A673 (cell line): ENCODE measurements at regions of chr13 and their contacts with region 1.

Region 1: GRCh38 chr13:101942038-101942437 is 459.8 kb downstream of the FGF14 start:
- DNase-seq: peak; percentile 80
- H3K4me3 ChIP-seq: no peak overlapping the region
- H3K27ac ChIP-seq: no peak overlapping the region
- H3K4me1 ChIP-seq: peaks cover 13% of the 10 kb centered on the region
- H3K27me3 ChIP-seq: no peaks in the 10 kb centered on the region
- CTCF ChIP-seq: peak; percentile 88

Region 2: DNA sequence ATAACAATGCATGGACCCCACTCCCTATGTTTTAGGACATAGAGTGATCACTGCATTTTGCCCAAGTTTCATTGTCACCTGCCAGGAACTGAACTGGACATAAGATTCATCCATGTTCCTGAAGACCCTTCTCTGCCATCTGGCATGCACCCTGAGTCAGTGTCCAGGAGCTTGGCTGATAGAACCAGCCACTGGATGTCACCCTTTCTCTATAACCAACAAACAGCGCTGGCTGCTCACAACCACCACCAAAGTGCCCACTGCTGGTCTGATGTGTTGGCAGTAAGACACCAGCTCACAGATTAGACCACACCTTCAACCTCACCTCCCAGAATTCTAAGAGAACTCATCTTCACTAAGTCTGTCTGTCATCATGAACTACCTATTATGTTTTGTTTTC is 156.2 kb before region 1 on chr13:
- CTCF ChIA-PET with region 1: interaction called, 5 read pairs
- POLR2A ChIA-PET with region 1: no interaction called
- intact Hi-C with region 1: loop called (anchors 2 kb)
- DNase-seq: peak; percentile 58
- H3K4me3 ChIP-seq: no peak overlapping the region
- H3K27ac ChIP-seq: no peak overlapping the region
- H3K4me1 ChIP-seq: no peaks in the 10 kb centered on the region
- H3K27me3 ChIP-seq: no peaks in the 10 kb centered on the region
- CTCF ChIP-seq: peak; percentile 51

Region 3: DNA sequence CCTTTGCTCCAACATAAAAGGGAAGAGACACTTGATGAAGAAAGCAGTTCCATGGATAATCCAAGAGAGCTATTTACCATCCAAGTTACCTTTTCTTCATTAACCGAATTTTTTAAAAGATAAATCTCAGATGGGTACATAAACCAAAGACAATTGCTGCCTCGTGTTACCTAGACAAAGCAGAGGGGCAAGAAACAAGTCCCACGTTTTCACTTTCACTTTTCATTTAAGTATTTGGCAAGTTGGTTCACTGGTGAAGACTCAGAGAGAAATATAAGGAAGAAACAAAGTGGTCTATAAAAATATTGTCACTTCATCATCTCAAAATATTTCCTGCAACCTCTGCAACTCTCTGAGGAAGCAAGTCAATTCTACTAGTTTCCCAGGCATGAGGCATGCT is 13.7 kb after region 1 on chr13:
- CTCF ChIA-PET with region 1: no interaction called
- POLR2A ChIA-PET with region 1: no interaction called
- intact Hi-C with region 1: no loop called
- DNase-seq: no peak
- H3K4me3 ChIP-seq: no peak overlapping the region
- H3K27ac ChIP-seq: no peak overlapping the region
- H3K4me1 ChIP-seq: no peaks in the 10 kb centered on the region
- H3K27me3 ChIP-seq: no peaks in the 10 kb centered on the region
- CTCF ChIP-seq: no peak

Region 4: DNA sequence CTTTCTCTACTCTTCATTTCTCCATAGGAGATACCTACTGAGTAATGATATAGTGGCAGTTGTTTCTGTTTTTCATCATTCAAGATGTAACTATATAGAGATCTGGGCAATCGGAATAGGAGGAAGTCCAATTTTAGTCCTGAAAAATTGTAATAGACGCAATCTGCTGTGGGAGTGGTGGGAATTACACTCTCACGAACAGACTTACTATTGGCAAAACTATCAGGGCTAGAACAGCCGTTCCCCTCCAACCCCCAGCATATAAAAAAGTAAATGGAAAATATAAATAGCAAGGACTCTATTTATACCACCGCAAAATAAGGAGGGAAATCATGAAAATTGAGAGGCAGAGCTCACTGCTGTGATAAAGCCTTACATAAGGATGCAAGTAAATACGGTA is 129.7 kb after region 1 on chr13:
- CTCF ChIA-PET with region 1: no interaction called
- POLR2A ChIA-PET with region 1: no interaction called
- intact Hi-C with region 1: no loop called
- DNase-seq: no peak
- H3K4me3 ChIP-seq: no peak overlapping the region
- H3K27ac ChIP-seq: no peak overlapping the region
- H3K4me1 ChIP-seq: no peaks in the 10 kb centered on the region
- H3K27me3 ChIP-seq: no peaks in the 10 kb centered on the region
- CTCF ChIP-seq: no peak

Region 5: GRCh38 chr13:102141625-102142472 is 199.8 kb after region 1 on chr13:
- CTCF ChIA-PET with region 1: no interaction called
- POLR2A ChIA-PET with region 1: no interaction called
- intact Hi-C with region 1: loop called (anchors 10 kb)
- DNase-seq: peak; percentile 66
- H3K4me3 ChIP-seq: no peak overlapping the region
- H3K27ac ChIP-seq: no peak overlapping the region
- H3K4me1 ChIP-seq: peaks cover 23% of the 10 kb centered on the region
- H3K27me3 ChIP-seq: no peaks in the 10 kb centered on the region
- CTCF ChIP-seq: peak; percentile 87

Region 6: DNA sequence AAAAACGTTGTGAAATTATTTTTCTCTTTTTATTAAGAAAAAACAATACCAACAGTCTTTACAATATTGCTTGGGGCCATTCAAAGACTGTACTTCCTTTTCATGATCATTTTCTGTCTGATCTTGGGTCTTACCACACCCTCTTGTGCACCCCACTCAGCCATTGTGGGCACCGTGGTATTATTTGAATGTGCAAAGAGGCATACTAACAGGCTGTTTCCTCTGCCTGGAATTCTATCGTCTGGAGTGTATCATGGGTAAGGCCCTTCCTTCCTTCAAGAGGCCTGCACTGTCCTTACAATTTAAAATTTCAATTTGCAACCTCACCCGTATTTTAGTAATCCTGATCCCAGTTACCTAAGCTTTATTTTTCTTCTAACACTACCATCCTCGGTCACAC is 383.3 kb after region 1 on chr13:
- CTCF ChIA-PET with region 1: interaction called, 17 read pairs
- POLR2A ChIA-PET with region 1: no interaction called
- intact Hi-C with region 1: loop called (anchors 2 kb)
- DNase-seq: peak; percentile 83
- H3K4me3 ChIP-seq: peak overlapping the region; percentile 10
- H3K27ac ChIP-seq: peak overlapping the region; percentile 92
- H3K4me1 ChIP-seq: peaks cover 86% of the 10 kb centered on the region
- H3K27me3 ChIP-seq: no peaks in the 10 kb centered on the region
- CTCF ChIP-seq: no peak

Region 7: GRCh38 chr13:102555917-102556553 is 614.0 kb after region 1 on chr13:
- CTCF ChIA-PET with region 1: interaction called, 13 read pairs
- POLR2A ChIA-PET with region 1: no interaction called
- intact Hi-C with region 1: loop called (anchors 1 kb)
- DNase-seq: peak; percentile 84
- H3K4me3 ChIP-seq: peak overlapping the region; percentile 31
- H3K27ac ChIP-seq: no peak overlapping the region
- H3K4me1 ChIP-seq: peaks cover 4% of the 10 kb centered on the region
- H3K27me3 ChIP-seq: no peaks in the 10 kb centered on the region
- CTCF ChIP-seq: peak; percentile 67